Endothelial cell of umbilical vein (primary cell): ENCODE measurements at regions of chr4 and their contacts with region 1.

Region 1: GRCh38 chr4:11623726-11624037 is 195.0 kb upstream of the HS3ST1 start:
- DNase-seq: peak; percentile 45
- H3K4me3 ChIP-seq: no peak overlapping the region
- H3K27ac ChIP-seq: no peak overlapping the region
- H3K4me1 ChIP-seq: peaks cover 10% of the 10 kb centered on the region
- H3K27me3 ChIP-seq: no peaks in the 10 kb centered on the region
- CTCF ChIP-seq: peak; percentile 11 to 48
- POLR2A ChIP-seq: no peak

Region 2: GRCh38 chr4:10664408-10664807 is 959.3 kb before region 1 on chr4:
- CTCF ChIA-PET with region 1: no interaction called
- POLR2A ChIA-PET with region 1: no interaction called
- dilution Hi-C with region 1: no loop called
- intact Hi-C with region 1: loop called (anchors 10 kb)
- DNase-seq: peak; percentile 92
- H3K4me3 ChIP-seq: no peak overlapping the region
- H3K27ac ChIP-seq: peak overlapping the region; percentile 14
- H3K4me1 ChIP-seq: peaks cover 15% of the 10 kb centered on the region
- H3K27me3 ChIP-seq: peaks cover 5 to 10% of the 10 kb centered on the region in 2 experiments
- CTCF ChIP-seq: no peak
- POLR2A ChIP-seq: no peak

Region 3: DNA sequence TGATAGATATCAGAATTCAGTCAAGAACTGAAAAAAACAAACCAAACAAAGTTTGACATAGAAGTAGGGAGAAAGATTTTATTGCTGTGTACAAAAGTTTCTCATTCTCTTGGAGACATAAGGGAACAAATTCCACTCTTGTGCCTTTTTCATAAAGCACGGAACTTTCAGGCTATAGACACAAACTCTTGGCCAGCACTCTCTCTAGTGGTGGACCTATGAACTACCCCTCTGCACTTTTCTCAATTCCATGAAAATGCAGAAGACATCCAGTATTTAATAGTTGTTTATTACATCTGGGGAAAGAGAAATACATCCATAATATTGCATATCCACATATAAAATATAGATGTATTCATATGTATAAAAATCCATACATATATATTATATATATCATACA is 96.6 kb after region 1 on chr4:
- CTCF ChIA-PET with region 1: interaction called, 4 read pairs
- POLR2A ChIA-PET with region 1: no interaction called
- dilution Hi-C with region 1: no loop called
- intact Hi-C with region 1: loop called (anchors 5 kb)
- DNase-seq: peak; percentile 62
- H3K4me3 ChIP-seq: no peak overlapping the region
- H3K27ac ChIP-seq: no peak overlapping the region
- H3K4me1 ChIP-seq: peaks cover 9% of the 10 kb centered on the region
- H3K27me3 ChIP-seq: no peaks in the 10 kb centered on the region
- CTCF ChIP-seq: peak; percentile 62 to 77
- POLR2A ChIP-seq: no peak